Activated naive CD4-positive, alpha-beta T cell treated with anti-CD3 and anti-CD28 coated beads, Interleukin-2, amount 10 ng/mL, durations not matched to agents 7 days and 5 days (primary cell): ENCODE measurements at regions of chr1 and their contacts with region 1.

Region 1: GRCh38 chr1:205227584-205228006 is at the start of gene TMCC2:
- DNase-seq: peak; percentile 87
- H3K4me3 Mint-ChIP-seq: peak within 1 kb of the TSS; percentile 82
- H3K27ac Mint-ChIP-seq: peak within 1 kb of the TSS; percentile 3
- H3K4me1 Mint-ChIP-seq: peaks cover 35% of the 10 kb centered on the region
- H3K27me3 Mint-ChIP-seq: peaks cover 50% of the 10 kb centered on the region

Region 2: GRCh38 chr1:204997591-204998355 is 229.8 kb before region 1 on chr1:
- CTCF ChIA-PET with region 1: no interaction called
- DNase-seq: no peak
- H3K4me3 Mint-ChIP-seq: no peak overlapping the region
- H3K27ac Mint-ChIP-seq: no peak overlapping the region
- H3K4me1 Mint-ChIP-seq: peaks cover 4% of the 10 kb centered on the region
- H3K27me3 Mint-ChIP-seq: peaks cover 20% of the 10 kb centered on the region

Region 3: DNA sequence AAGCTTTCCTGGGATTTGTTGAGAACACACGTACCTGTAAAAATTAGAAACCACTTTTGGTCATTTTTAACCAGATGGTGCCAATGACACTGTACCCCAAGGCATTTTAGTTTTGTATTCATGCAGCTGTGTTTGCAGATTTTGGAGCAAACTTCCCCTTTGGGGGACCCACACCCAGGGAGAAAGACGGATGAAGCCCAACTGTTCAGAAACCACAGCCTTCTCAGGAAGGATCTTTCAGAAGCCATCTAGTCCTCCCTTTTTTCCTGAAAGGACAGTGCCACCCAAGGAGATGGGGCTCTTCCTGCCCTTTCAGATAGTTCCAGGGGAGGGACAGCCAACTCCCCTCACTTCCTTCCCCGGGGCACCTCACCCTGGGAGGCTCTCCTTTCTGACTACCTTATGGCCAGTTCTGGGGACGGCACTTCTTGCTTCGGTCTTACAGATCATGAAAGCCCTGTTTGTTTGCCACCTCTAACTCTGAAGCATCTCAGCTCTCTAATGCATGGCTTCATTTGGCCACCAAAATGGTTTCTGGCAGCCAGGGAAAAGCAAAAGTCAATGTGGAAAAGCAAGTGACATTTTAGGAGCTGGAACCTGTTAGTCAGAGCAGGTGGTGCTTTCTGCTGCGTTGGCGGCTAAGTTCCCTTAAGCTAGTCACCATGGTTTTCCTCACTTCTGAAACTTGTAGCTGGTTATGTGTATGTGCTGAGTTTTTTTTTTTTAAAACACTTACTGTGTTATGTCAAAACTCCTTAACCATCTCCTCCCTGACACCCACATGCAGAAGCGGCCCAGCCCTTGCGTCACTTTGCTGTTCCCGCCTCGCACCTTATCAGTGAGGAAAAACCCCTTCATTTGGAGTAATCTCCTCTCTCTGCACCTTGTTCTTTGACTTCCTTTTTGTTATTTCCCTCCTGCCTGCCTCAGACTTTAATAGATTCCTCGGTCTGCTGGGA is 10.2 kb after region 1 on chr1:
- CTCF ChIA-PET with region 1: interaction called, 29 read pairs
- DNase-seq: no peak
- H3K4me3 Mint-ChIP-seq: no peak overlapping the region
- H3K27ac Mint-ChIP-seq: no peak overlapping the region
- H3K4me1 Mint-ChIP-seq: peaks cover 19% of the 10 kb centered on the region
- H3K27me3 Mint-ChIP-seq: peaks cover 14% of the 10 kb centered on the region

Region 4: DNA sequence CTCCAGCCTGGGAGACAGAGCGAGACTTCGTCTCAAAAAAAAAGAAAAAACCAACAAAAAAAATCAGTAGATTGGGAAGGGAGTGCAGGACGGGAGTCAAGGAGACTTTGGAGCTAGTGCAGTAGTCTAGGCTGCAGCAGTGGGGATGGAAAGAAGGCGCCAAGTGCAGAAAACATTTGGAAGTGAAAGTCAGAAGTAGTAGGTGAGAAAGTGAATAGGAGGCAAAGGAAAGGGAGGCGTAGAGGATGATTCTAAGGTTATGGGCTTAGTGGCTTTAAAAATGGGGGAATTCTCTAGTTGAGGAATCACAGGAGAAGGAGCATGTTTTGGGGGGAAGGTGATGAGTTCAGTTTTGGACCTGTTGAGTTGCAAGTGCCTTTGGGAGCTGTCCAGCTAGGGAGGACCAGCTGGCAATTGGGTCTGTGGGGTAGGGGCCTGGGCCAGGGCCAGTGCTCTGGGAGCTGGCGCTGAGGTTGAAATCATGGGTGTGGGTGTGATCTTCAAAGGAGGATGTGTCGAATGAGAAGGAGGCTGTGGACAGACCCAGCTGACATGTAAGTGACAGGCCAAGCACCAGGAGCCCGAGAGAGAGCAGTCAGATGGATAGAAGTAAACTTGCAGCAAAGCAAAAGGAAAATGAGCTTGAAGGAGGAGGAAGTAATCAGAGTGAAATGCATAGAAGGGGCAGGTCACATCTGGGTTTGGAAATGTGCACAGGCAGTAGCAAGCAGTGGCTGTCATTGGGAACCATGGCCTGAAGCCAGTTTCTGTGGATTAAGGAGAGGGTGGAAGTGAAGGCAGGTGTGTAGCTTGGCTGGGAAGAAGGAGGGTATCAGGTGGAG is 16.0 kb after region 1 on chr1:
- CTCF ChIA-PET with region 1: interaction called, 29 read pairs
- DNase-seq: no peak
- H3K4me3 Mint-ChIP-seq: no peak overlapping the region
- H3K27ac Mint-ChIP-seq: no peak overlapping the region
- H3K4me1 Mint-ChIP-seq: peaks cover 16% of the 10 kb centered on the region
- H3K27me3 Mint-ChIP-seq: peaks cover 9% of the 10 kb centered on the region

Region 5: DNA sequence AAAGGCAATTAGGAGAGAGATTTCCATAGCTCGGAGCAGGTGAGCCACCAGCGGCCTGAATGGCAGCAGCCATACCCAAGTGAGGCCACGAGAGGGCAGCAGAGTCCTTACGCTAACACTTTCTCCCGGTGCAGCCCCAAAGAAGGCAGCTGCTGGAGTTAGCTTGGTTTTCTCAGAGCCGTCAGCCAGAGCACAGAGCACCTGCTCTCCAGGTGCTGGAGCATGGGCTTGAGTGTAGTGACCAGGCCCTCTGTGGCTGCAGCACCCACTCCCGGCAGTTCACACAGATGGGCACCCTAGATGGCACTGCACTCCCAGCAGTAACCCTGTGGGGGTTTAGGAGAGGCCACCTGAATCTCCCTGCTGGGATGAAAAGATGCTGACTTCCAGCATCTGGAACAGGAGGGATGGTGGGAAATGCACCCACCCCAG is 46.0 kb after region 1 on chr1:
- CTCF ChIA-PET with region 1: interaction called, 15 read pairs
- DNase-seq: peak; percentile 92
- H3K4me3 Mint-ChIP-seq: no peak overlapping the region
- H3K27ac Mint-ChIP-seq: peak overlapping the region; percentile 82
- H3K4me1 Mint-ChIP-seq: peaks cover 38% of the 10 kb centered on the region
- H3K27me3 Mint-ChIP-seq: peaks cover 26% of the 10 kb centered on the region

Region 6: DNA sequence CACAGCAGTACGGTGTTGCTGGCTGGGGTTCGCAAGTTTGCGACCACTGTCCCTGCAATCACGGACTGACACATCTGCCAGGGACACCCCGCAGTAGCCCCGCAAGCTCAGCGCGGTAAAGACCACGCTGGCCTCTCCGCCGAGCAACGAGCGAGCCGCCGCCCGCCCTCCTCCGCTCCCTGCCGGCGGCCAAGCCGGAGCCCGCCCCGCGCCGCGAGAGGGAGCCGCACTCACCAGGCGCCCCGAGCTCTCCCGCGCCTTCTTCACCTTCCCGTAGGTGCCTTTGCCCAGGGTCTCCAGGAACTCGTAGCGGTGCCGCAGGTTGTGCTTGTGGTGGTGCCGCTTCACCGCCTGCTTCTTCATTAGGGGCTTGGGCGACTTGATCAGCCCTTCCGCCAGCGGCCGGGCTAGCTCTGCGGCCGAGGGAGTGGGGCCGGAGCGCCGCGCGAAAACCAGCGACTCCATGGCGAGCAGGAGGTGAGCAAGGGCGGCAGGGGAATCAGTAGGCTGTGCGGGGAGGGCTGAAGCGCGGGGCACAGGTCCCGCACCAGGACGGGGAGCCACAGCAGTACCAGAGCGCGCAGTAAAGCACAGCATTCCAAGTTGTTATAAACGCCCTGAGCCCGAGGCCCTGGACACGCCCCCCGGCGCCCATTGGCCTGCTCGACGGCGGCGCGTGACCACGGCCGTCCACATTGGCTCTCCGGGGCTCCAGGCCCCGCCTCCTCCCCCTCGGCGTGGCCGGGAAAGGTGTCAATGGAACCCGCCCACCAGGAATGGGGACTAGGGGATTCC is 93.8 kb after region 1 on chr1 and contains the start of gene NUAK2:
- CTCF ChIA-PET with region 1: interaction called, 21 read pairs
- DNase-seq: peak; percentile 88
- H3K4me3 Mint-ChIP-seq: peak within 1 kb of the TSS; percentile 90
- H3K27ac Mint-ChIP-seq: peak within 1 kb of the TSS; percentile 87
- H3K4me1 Mint-ChIP-seq: peaks cover 65% of the 10 kb centered on the region
- H3K27me3 Mint-ChIP-seq: peaks cover 27% of the 10 kb centered on the region